ENCODE measurements at regions of chr10 and their contacts with region 1.

Region 1: GRCh38 chr10:32367793-32368453 is 21.0 kb upstream of the EPC1 start:
- DNase-seq: no peak
- ATAC-seq: peak; percentile 65
- H3K4me3 ChIP-seq: no peak overlapping the region
- H3K27ac ChIP-seq: no peak overlapping the region
- H3K4me1 ChIP-seq: no peaks in the 10 kb centered on the region
- H3K27me3 ChIP-seq: no peaks in the 10 kb centered on the region
- CTCF ChIP-seq: peak; percentile 61 to 80 (median 69)
- EP300 ChIP-seq: no peak
- POLR2A ChIP-seq: no peak
- RAD21 ChIP-seq: peak; percentile 75

Region 2: GRCh38 chr10:32190890-32191491 is 176.9 kb before region 1 on chr10:
- CTCF ChIA-PET with region 1: interaction called, 14 read pairs
- POLR2A ChIA-PET with region 1: interaction called, 5 read pairs
- RAD21 ChIA-PET with region 1: interaction called, 3 read pairs
- SMC1A ChIA-PET with region 1: interaction called, 36 read pairs
- in situ Hi-C with region 1: no loop called
- intact Hi-C with region 1: loop called (anchors 2 kb)
- DNase-seq: no peak
- ATAC-seq: peak; percentile 87
- H3K4me3 ChIP-seq: no peak overlapping the region
- H3K27ac ChIP-seq: no peak overlapping the region
- H3K4me1 ChIP-seq: no peaks in the 10 kb centered on the region
- H3K27me3 ChIP-seq: no peaks in the 10 kb centered on the region
- CTCF ChIP-seq: peak; percentile 54 to 73 (median 69)
- EP300 ChIP-seq: no peak
- POLR2A ChIP-seq: no peak
- RAD21 ChIP-seq: peak; percentile 77

Region 3: GRCh38 chr10:32357056-32357735 is 10.7 kb before region 1 on chr10:
- CTCF ChIA-PET with region 1: interaction called, 15 read pairs
- POLR2A ChIA-PET with region 1: interaction called, 5 read pairs
- RAD21 ChIA-PET with region 1: interaction called, 5 read pairs
- SMC1A ChIA-PET with region 1: interaction called, 11 read pairs
- in situ Hi-C with region 1: no loop called
- intact Hi-C with region 1: no loop called
- DNase-seq: no peak
- ATAC-seq: no peak
- H3K4me3 ChIP-seq: no peak overlapping the region
- H3K27ac ChIP-seq: no peak overlapping the region
- H3K4me1 ChIP-seq: peaks cover 15% of the 10 kb centered on the region
- H3K27me3 ChIP-seq: no peaks in the 10 kb centered on the region
- CTCF ChIP-seq: no peak
- EP300 ChIP-seq: no peak
- POLR2A ChIP-seq: no peak
- RAD21 ChIP-seq: no peak

Region 4: DNA sequence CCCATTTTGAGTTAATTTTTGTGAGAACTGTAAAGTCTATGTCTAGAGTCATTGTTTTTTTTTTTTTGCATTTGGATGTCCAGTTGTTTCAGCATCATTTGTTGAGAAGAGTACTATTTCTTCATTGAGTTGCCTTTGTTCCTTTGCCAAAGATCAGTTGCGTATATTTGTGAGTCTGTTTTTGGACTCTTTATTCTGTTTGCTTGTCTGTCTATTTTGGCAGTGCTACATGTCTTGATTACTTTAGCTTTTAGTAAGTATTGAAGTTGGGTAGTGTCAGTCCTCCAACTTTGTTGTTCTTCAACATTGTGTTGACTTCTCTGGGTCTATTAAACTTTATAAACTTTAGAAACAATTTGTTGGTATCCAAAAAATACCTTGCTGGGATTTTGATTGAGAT is 109.6 kb after region 1 on chr10:
- CTCF ChIA-PET with region 1: no interaction called
- POLR2A ChIA-PET with region 1: no interaction called
- RAD21 ChIA-PET with region 1: no interaction called
- SMC1A ChIA-PET with region 1: no interaction called
- in situ Hi-C with region 1: no loop called
- intact Hi-C with region 1: no loop called
- DNase-seq: no peak
- ATAC-seq: no peak
- H3K4me3 ChIP-seq: no peak overlapping the region
- H3K27ac ChIP-seq: no peak overlapping the region
- H3K4me1 ChIP-seq: no peaks in the 10 kb centered on the region
- H3K27me3 ChIP-seq: no peaks in the 10 kb centered on the region
- CTCF ChIP-seq: no peak
- EP300 ChIP-seq: no peak
- POLR2A ChIP-seq: no peak
- RAD21 ChIP-seq: no peak

Region 5: GRCh38 chr10:33952692-33953348 is 1584.9 kb after region 1 on chr10:
- CTCF ChIA-PET with region 1: no interaction called
- POLR2A ChIA-PET with region 1: no interaction called
- RAD21 ChIA-PET with region 1: no interaction called
- SMC1A ChIA-PET with region 1: no interaction called
- in situ Hi-C with region 1: no loop called
- intact Hi-C with region 1: no loop called
- DNase-seq: no peak
- ATAC-seq: no peak
- H3K4me3 ChIP-seq: no peak overlapping the region
- H3K27ac ChIP-seq: no peak overlapping the region
- H3K4me1 ChIP-seq: no peaks in the 10 kb centered on the region
- H3K27me3 ChIP-seq: no peaks in the 10 kb centered on the region
- CTCF ChIP-seq: no peak
- EP300 ChIP-seq: no peak
- POLR2A ChIP-seq: no peak
- RAD21 ChIP-seq: no peak

Measured in GM12878 (cell line).